ENCODE measurements at regions of chr9 and their contacts with region 1.

Region 1: GRCh38 chr9:129988607-129989361 is 54.2 kb downstream of the FNBP1 start:
- DNase-seq: no peak
- H3K4me3 ChIP-seq: no peak overlapping the region
- H3K27ac ChIP-seq: no peak overlapping the region
- H3K4me1 ChIP-seq: peaks cover 30% of the 10 kb centered on the region
- H3K27me3 ChIP-seq: no peaks in the 10 kb centered on the region
- CTCF ChIP-seq: no peak

Region 2: DNA sequence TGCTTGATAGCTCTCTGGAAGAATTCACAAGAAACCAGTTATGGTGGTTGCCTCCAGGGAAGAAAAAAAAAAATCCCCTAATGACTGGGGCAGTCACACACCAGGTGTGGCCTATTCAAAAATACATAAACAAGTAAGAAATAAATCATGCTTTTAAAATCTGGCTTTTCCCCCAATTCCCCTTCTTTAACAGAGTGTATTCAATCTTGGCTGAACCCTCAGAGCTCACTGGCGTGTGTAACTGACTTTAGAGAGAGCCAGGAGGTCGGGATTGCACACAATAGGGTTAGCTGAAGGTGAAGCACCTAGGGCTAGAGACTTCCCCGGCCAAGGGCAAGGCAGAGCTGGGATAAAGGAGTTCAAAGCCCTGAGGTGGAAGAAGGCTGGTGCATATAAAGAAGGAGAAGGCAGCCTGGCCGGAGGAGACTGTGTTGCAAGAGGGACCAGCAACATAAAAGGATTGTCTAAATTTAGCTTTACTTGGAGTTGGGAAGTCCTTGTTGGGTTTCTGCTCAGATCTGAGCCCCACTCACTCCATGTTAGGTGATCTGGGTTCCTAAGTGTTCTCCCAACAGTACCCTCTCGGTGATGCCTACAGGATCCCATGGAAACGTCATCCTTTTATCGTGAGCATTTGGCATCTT is 34.5 kb after region 1 on chr9:
- CTCF ChIA-PET with region 1: interaction called, 7 read pairs
- POLR2A ChIA-PET with region 1: no interaction called
- intact Hi-C with region 1: loop called (anchors 1 kb)
- DNase-seq: peak; percentile 49 to 94
- H3K4me3 ChIP-seq: no peak overlapping the region
- H3K27ac ChIP-seq: peak overlapping the region; percentile 89
- H3K4me1 ChIP-seq: peaks cover 72% of the 10 kb centered on the region
- H3K27me3 ChIP-seq: no peaks in the 10 kb centered on the region
- CTCF ChIP-seq: no peak

Region 3: GRCh38 chr9:130172161-130172857 is 183.5 kb after region 1 on chr9 and contains the start of gene NCS1:
- CTCF ChIA-PET with region 1: no interaction called
- POLR2A ChIA-PET with region 1: interaction called, 19 read pairs
- intact Hi-C with region 1: no loop called
- DNase-seq: peak in 1 of 2 experiments; percentile 76
- H3K4me3 ChIP-seq: peak within 1 kb of the TSS; percentile 62
- H3K27ac ChIP-seq: no peak within 1 kb of the TSS
- H3K4me1 ChIP-seq: peaks cover 4% of the 10 kb centered on the region; the same call in 1 of the 2 replicates
- H3K27me3 ChIP-seq: no peaks in the 10 kb centered on the region
- CTCF ChIP-seq: no peak
- total RNA-seq, gene NCS1: 53.0 and 59.2 TPM in 2 replicates

Measured in PC-9 (cell line).